Breast epithelium (tissue), 4 donors: ENCODE measurements at regions of chr3 and their contacts with region 1.

Region 1: GRCh38 chr3:111717601-111718000 is 122.5 kb upstream of the ZBED2 start:
- DNase-seq: peak; percentile 75 to 89
- H3K4me3 ChIP-seq: no peak overlapping the region
- H3K27ac ChIP-seq: peak overlapping the region in 1 of 2 donors; percentile 22
- H3K4me1 ChIP-seq: no peaks in the 10 kb centered on the region
- H3K27me3 ChIP-seq: no peaks in the 10 kb centered on the region
- CTCF ChIP-seq: peak; percentile 92 to 98 (median 97)
- POLR2A ChIP-seq: no peak

Region 2: DNA sequence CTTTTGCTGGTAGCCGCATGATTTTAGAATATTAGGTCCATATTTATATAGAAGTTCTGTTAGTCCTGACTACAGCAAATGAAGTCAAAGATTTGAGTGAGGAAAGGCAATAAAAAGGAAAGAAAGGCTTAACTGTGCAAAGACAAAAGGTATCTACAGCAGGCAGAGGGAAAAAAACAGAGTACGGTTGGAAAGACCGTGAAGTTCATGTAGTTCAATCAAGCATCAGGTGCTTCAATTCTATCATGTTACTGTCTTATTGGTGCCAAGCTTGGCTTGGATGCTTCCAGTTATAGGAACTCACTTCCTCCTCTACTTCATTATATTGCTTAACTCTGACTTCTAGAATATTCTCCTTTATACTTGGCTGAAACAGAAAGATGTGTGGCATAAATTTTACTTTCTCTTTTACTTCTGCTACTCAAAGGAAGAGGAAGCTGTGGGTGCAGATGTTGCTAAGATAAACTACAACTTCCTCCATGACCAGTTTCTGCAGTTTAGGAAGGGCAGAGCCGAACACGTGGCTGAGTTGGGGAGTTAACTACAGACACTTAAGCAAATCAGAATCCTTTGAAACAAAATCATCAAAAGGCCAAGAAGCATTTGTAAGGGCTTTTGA is 49.9 kb before region 1 on chr3:
- intact Hi-C with region 1: no loop called
- DNase-seq: no peak
- H3K4me3 ChIP-seq: no peak overlapping the region
- H3K27ac ChIP-seq: no peak overlapping the region
- H3K4me1 ChIP-seq: no peaks in the 10 kb centered on the region
- H3K27me3 ChIP-seq: no peaks in the 10 kb centered on the region
- CTCF ChIP-seq: no peak
- POLR2A ChIP-seq: no peak

Region 3: GRCh38 chr3:111859974-111860859 is 142.6 kb after region 1 on chr3:
- intact Hi-C with region 1: loop called (anchors 10 kb)
- DNase-seq: peak; percentile 66 to 85
- H3K4me3 ChIP-seq: peak overlapping the region; percentile 78 to 90 (median 86)
- H3K27ac ChIP-seq: peak overlapping the region; percentile 96 to 98
- H3K4me1 ChIP-seq: no peaks in the 10 kb centered on the region
- H3K27me3 ChIP-seq: no peaks in the 10 kb centered on the region
- CTCF ChIP-seq: peak; percentile 42 to 83 (median 59)
- POLR2A ChIP-seq: no peak

Region 4: GRCh38 chr3:111978493-111979433 is 261.2 kb after region 1 on chr3 and contains the start of gene ABHD10:
- intact Hi-C with region 1: loop called (anchors 5 kb)
- DNase-seq: peak; percentile 86 to 92
- H3K4me3 ChIP-seq: peak within 1 kb of the TSS; percentile 70 to 95 (median 77)
- H3K27ac ChIP-seq: peak within 1 kb of the TSS; percentile 83 to 91
- H3K4me1 ChIP-seq: peaks cover 0 to 13% of the 10 kb centered on the region in 2 donors
- H3K27me3 ChIP-seq: no peaks in the 10 kb centered on the region
- CTCF ChIP-seq: no peak
- POLR2A ChIP-seq: peak; percentile 70
- total RNA-seq, gene ABHD10: 17.3 to 28.5 (median 22.6) TPM

Region 5: DNA sequence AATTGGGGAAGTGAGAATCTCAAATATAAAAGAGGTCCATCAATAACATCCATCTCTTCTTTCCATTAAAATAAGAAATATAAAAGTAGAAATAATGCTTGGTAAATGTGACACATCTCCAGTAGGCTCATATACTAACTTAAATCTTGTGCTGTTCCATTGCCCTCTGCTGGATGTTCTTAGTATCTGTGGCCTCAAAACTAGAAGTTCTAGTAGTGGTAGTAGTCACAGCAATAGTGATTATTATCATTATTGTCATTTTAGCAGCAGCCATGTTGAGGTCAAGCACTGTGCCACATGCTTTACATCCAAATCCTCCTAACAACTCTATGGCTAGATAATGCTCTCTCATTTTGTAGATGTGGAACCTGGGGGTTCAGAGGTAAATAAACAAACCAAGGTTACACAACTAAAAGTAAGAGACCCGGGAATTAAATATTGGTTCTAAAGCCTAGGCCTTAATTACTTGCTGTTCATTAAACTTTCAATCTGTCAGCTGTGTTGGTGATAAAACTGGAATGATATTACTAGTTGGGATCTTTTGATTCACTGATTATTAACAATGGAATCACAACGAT is 801.9 kb after region 1 on chr3:
- intact Hi-C with region 1: no loop called
- DNase-seq: no peak
- H3K4me3 ChIP-seq: no peak overlapping the region
- H3K27ac ChIP-seq: no peak overlapping the region
- H3K4me1 ChIP-seq: no peaks in the 10 kb centered on the region
- H3K27me3 ChIP-seq: no peaks in the 10 kb centered on the region
- CTCF ChIP-seq: peak; percentile 51 to 76 (median 68)
- POLR2A ChIP-seq: no peak